ENCODE measurements at regions of chr4 and their contacts with region 1.

Region 1: DNA sequence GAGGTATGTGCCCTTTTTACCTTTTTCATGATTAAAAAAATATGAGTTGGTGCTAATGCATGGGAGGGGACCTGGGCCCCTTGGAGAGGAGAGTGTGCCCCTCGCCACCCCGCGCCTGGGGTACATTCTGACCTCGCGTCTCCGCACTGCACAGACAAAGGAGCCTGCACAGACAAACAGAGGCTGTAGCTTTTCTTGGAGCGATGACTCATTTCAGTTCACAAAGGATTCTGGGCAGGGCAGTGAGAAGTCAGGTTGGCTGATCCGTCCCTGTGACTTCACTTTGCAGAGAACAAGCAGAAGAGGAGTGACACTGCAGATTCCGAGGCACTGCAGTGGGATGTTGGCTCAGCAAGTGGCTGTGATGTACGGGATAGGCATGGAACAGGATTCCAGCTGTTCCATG is 82.9 kb downstream of the STOX2 start:
- DNase-seq: peak; percentile 95
- ATAC-seq: peak; percentile 82
- H3K4me3 ChIP-seq: peak overlapping the region; percentile 34
- H3K27ac ChIP-seq: peak overlapping the region; percentile 92
- H3K4me1 ChIP-seq: peaks cover 18% of the 10 kb centered on the region
- H3K27me3 ChIP-seq: no peaks in the 10 kb centered on the region
- CTCF ChIP-seq: no peak
- POLR2A ChIP-seq: 0 out of 2 replicates have a peak, but pooled peaks have one; percentile 61
- RAD21 ChIP-seq: no peak

Region 2: DNA sequence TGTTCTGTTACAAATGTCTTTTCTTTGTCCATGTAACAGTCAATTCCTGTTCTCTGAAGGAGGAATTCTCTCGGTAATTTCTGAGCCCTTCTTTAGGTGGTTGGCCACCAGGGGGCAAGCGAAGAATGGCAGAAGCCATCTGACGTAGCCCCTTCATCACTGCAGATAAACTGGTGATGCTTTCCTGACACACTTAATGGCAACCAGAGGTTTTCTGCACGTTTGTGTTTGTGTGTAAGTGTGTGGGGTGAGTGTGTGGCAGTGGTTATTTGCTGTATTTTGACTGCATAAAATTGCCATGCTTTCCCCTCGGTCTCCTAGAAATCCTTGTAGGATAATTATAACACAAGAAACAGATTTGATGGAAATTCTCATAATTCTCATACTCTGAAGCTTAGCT is 147.7 kb before region 1 on chr4:
- CTCF ChIA-PET with region 1: no interaction called
- POLR2A ChIA-PET with region 1: no interaction called
- dilution Hi-C with region 1: no loop called
- in situ Hi-C with region 1: no loop called
- intact Hi-C with region 1: loop called (anchors 10 kb)
- DNase-seq: peak; percentile 78
- ATAC-seq: peak; percentile 86
- H3K4me3 ChIP-seq: no peak overlapping the region
- H3K27ac ChIP-seq: no peak overlapping the region
- H3K4me1 ChIP-seq: no peaks in the 10 kb centered on the region; the same call in 1 of the 2 replicates
- H3K27me3 ChIP-seq: peaks cover 2% of the 10 kb centered on the region; the same call in 1 of the 2 replicates
- CTCF ChIP-seq: peak; percentile 96
- POLR2A ChIP-seq: 0 out of 2 replicates have a peak, but pooled peaks have one; percentile 38
- RAD21 ChIP-seq: peak; percentile 98

Region 3: GRCh38 chr4:183905081-183905592 is 82.9 kb before region 1 on chr4 and contains the start of gene STOX2:
- CTCF ChIA-PET with region 1: no interaction called
- POLR2A ChIA-PET with region 1: no interaction called
- dilution Hi-C with region 1: no loop called
- in situ Hi-C with region 1: no loop called
- intact Hi-C with region 1: loop called (anchors 5 kb)
- DNase-seq: peak; percentile 55
- ATAC-seq: peak; percentile 79
- H3K4me3 ChIP-seq: peak within 1 kb of the TSS; percentile 60
- H3K27ac ChIP-seq: peak within 1 kb of the TSS; percentile 41
- H3K4me1 ChIP-seq: no peaks in the 10 kb centered on the region
- H3K27me3 ChIP-seq: peaks cover 16% of the 10 kb centered on the region
- CTCF ChIP-seq: no peak
- POLR2A ChIP-seq: no peak
- RAD21 ChIP-seq: no peak
- total RNA-seq, gene STOX2: 4.4 and 5.4 TPM in 2 replicates

Region 4: GRCh38 chr4:183950536-183950935 is 37.5 kb before region 1 on chr4:
- CTCF ChIA-PET with region 1: no interaction called
- POLR2A ChIA-PET with region 1: no interaction called
- dilution Hi-C with region 1: no loop called
- in situ Hi-C with region 1: no loop called
- intact Hi-C with region 1: no loop called
- DNase-seq: no peak
- ATAC-seq: no peak
- H3K4me3 ChIP-seq: no peak overlapping the region
- H3K27ac ChIP-seq: no peak overlapping the region
- H3K4me1 ChIP-seq: no peaks in the 10 kb centered on the region
- H3K27me3 ChIP-seq: no peaks in the 10 kb centered on the region
- CTCF ChIP-seq: no peak
- POLR2A ChIP-seq: no peak
- RAD21 ChIP-seq: no peak

Region 5: GRCh38 chr4:184016759-184017668 is 29.0 kb after region 1 on chr4:
- CTCF ChIA-PET with region 1: no interaction called
- POLR2A ChIA-PET with region 1: interaction called, 3 read pairs
- dilution Hi-C with region 1: no loop called
- in situ Hi-C with region 1: no loop called
- intact Hi-C with region 1: loop called (anchors 1 kb)
- DNase-seq: peak; percentile 84
- ATAC-seq: peak; percentile 84
- H3K4me3 ChIP-seq: no peak overlapping the region
- H3K27ac ChIP-seq: peak overlapping the region; percentile 100
- H3K4me1 ChIP-seq: peaks cover 12% of the 10 kb centered on the region
- H3K27me3 ChIP-seq: no peaks in the 10 kb centered on the region
- CTCF ChIP-seq: no peak
- POLR2A ChIP-seq: no peak
- RAD21 ChIP-seq: no peak

Region 6: GRCh38 chr4:184039963-184040383 is 52.0 kb after region 1 on chr4:
- CTCF ChIA-PET with region 1: no interaction called
- POLR2A ChIA-PET with region 1: interaction called, 3 read pairs
- dilution Hi-C with region 1: no loop called
- in situ Hi-C with region 1: no loop called
- intact Hi-C with region 1: loop called (anchors 2 kb)
- DNase-seq: no peak
- ATAC-seq: peak; percentile 45
- H3K4me3 ChIP-seq: no peak overlapping the region
- H3K27ac ChIP-seq: peak overlapping the region; percentile 91; the same call in 1 of the 2 replicates
- H3K4me1 ChIP-seq: peaks cover 3% of the 10 kb centered on the region; the same call in 1 of the 2 replicates
- H3K27me3 ChIP-seq: no peaks in the 10 kb centered on the region; the same call in 1 of the 2 replicates
- CTCF ChIP-seq: no peak
- POLR2A ChIP-seq: no peak
- RAD21 ChIP-seq: no peak

Region 7: GRCh38 chr4:184100297-184100885 is 112.4 kb after region 1 on chr4:
- CTCF ChIA-PET with region 1: interaction called, 3 read pairs
- POLR2A ChIA-PET with region 1: no interaction called
- dilution Hi-C with region 1: no loop called
- in situ Hi-C with region 1: no loop called
- intact Hi-C with region 1: loop called (anchors 5 kb)
- DNase-seq: peak; percentile 26
- ATAC-seq: peak; percentile 75
- H3K4me3 ChIP-seq: no peak overlapping the region
- H3K27ac ChIP-seq: peak overlapping the region; percentile 80; the same call in 1 of the 2 replicates
- H3K4me1 ChIP-seq: peaks cover 14% of the 10 kb centered on the region; the same call in 1 of the 2 replicates
- H3K27me3 ChIP-seq: no peaks in the 10 kb centered on the region; the same call in 1 of the 2 replicates
- CTCF ChIP-seq: peak; percentile 83
- POLR2A ChIP-seq: no peak
- RAD21 ChIP-seq: peak; percentile 88

Measured in IMR-90 (cell line).